Activated CD4-positive, alpha-beta memory T cell treated with anti-CD3 and anti-CD28 coated beads for 36 hours (primary cell): ENCODE measurements at regions of chr15 and their contacts with region 1.

Region 1: DNA sequence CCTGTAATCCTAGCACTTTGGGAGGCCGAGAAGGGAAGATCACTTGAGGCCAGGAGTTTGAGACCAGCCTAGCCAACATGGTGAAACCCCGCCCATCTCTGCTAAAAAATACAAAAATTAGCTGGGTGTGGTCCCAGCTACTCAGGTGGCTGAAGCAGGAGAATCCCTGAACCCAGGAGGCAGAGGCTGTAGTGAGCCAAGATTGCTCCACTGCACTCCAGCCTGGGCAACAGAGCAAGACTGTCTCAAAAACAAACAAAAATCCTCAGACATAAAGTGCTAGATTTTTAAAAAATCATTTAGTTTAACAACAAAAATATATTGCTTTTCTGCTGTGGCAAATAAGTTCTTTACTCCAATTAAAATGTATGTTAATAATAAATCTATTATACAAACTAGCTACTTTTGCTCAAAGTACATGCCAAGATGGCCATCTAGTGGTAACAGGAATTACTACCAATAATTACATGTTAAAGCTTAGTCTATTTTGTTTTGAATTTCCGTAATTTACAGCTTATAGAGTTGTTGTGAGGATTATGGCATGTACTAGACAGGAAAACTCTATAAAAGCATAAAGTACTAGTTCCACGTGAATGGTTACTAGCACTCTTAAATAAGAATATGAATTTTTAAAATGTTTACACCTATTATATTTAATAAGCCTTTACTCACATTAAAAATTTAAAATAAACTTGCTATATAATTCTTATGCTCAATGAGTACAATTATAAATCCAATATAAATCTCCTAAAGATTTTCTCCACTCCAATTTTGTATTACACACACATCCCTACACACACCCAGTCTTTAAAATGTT is 39.0 kb downstream of the GABPB1 start:
- DNase-seq: no peak
- H3K4me3 Mint-ChIP-seq: no peak overlapping the region
- H3K27ac Mint-ChIP-seq: no peak overlapping the region
- H3K4me1 Mint-ChIP-seq: peaks cover 22% of the 10 kb centered on the region
- H3K27me3 Mint-ChIP-seq: no peaks in the 10 kb centered on the region

Region 2: DNA sequence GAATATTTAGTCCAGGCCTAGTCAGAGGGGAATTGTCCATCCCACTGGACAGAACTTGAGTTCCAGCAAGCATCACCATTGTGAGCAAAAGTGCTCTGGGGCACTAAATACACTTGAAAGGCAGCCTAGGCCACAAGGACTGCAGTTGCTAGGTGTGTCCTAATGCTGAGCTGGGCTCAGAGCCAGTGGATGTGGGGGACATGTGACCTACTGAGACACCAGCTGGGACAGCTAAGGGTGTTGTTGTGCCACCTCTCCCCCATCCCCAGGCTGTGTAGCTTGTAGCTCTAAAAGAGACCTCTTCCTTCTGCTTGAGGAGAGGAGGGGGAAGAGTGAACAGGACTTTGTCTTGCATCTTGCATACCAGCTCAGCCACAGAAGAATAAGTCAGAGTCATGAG is 574.3 kb before region 1 on chr15:
- CTCF ChIA-PET with region 1: no interaction called
- POLR2A ChIA-PET with region 1: no interaction called
- intact Hi-C with region 1: no loop called
- DNase-seq: no peak
- H3K4me3 Mint-ChIP-seq: no peak overlapping the region
- H3K27ac Mint-ChIP-seq: no peak overlapping the region
- H3K4me1 Mint-ChIP-seq: no peaks in the 10 kb centered on the region
- H3K27me3 Mint-ChIP-seq: no peaks in the 10 kb centered on the region

Region 3: GRCh38 chr15:49876401-49877038 is 439.5 kb before region 1 on chr15:
- CTCF ChIA-PET with region 1: interaction called, 6 read pairs
- POLR2A ChIA-PET with region 1: no interaction called
- intact Hi-C with region 1: loop called (anchors 10 kb)
- DNase-seq: no peak
- H3K4me3 Mint-ChIP-seq: no peak overlapping the region
- H3K27ac Mint-ChIP-seq: no peak overlapping the region
- H3K4me1 Mint-ChIP-seq: no peaks in the 10 kb centered on the region
- H3K27me3 Mint-ChIP-seq: peaks cover 2% of the 10 kb centered on the region

Region 4: GRCh38 chr15:50298340-50298739 is 17.7 kb before region 1 on chr15:
- CTCF ChIA-PET with region 1: interaction called, 11 read pairs
- POLR2A ChIA-PET with region 1: no interaction called
- intact Hi-C with region 1: no loop called
- DNase-seq: no peak
- H3K4me3 Mint-ChIP-seq: no peak overlapping the region
- H3K27ac Mint-ChIP-seq: no peak overlapping the region
- H3K4me1 Mint-ChIP-seq: no peaks in the 10 kb centered on the region
- H3K27me3 Mint-ChIP-seq: no peaks in the 10 kb centered on the region

Region 5: GRCh38 chr15:50330921-50331320 is 14.9 kb after region 1 on chr15:
- CTCF ChIA-PET with region 1: interaction called, 17 read pairs
- POLR2A ChIA-PET with region 1: no interaction called
- intact Hi-C with region 1: no loop called
- DNase-seq: no peak
- H3K4me3 Mint-ChIP-seq: no peak overlapping the region
- H3K27ac Mint-ChIP-seq: no peak overlapping the region
- H3K4me1 Mint-ChIP-seq: peaks cover 20% of the 10 kb centered on the region
- H3K27me3 Mint-ChIP-seq: no peaks in the 10 kb centered on the region